B cell (primary cell): ENCODE measurements at regions of chr12 and their contacts with region 1.

Region 1: DNA sequence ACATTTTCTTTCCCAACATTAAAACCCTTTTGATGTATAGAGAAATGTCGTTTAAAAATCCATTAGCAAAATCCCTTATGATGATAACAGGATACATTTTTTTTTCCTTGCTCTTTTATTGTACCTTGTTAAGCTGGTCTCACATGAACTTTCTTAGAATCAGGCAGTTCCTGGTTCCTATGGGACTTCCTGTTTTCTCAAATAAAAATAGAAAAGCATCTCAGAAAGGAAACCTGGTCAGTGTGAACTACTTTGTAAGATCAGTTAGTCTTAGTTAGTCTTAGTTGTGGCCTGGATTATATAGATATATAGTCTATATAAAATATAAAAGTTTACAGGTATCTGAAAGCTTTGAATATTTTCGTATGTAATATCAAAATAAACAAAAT is 40.3 kb downstream of the LEMD3 start:
- DNase-seq: peak; percentile 62
- ATAC-seq: peak; percentile 47
- H3K4me3 ChIP-seq: peak overlapping the region in 2 of 5 experiments; percentile 3 to 34
- H3K4me3 Mint-ChIP-seq: peak overlapping the region; percentile 72
- H3K27ac ChIP-seq: peak overlapping the region; percentile 57 to 82
- H3K27ac Mint-ChIP-seq: peak overlapping the region; percentile 72
- H3K4me1 ChIP-seq: peaks cover 34 to 59% of the 10 kb centered on the region in 2 donors
- H3K4me1 Mint-ChIP-seq: peaks cover 57% of the 10 kb centered on the region
- H3K27me3 ChIP-seq: no peaks in the 10 kb centered on the region
- H3K27me3 Mint-ChIP-seq: no peaks in the 10 kb centered on the region
- CTCF ChIP-seq: no peak

Region 2: GRCh38 chr12:65074932-65075331 is 134.7 kb before region 1 on chr12:
- CTCF ChIA-PET with region 1: no interaction called
- POLR2A ChIA-PET with region 1: interaction called, 11 read pairs
- intact Hi-C with region 1: no loop called
- DNase-seq: no peak
- ATAC-seq: no peak
- H3K4me3 ChIP-seq: no peak overlapping the region
- H3K4me3 Mint-ChIP-seq: no peak overlapping the region
- H3K27ac ChIP-seq: no peak overlapping the region
- H3K27ac Mint-ChIP-seq: no peak overlapping the region
- H3K4me1 ChIP-seq: no peaks in the 10 kb centered on the region
- H3K4me1 Mint-ChIP-seq: peaks cover 6% of the 10 kb centered on the region
- H3K27me3 ChIP-seq: no peaks in the 10 kb centered on the region
- H3K27me3 Mint-ChIP-seq: peaks cover 17% of the 10 kb centered on the region
- CTCF ChIP-seq: no peak

Region 3: DNA sequence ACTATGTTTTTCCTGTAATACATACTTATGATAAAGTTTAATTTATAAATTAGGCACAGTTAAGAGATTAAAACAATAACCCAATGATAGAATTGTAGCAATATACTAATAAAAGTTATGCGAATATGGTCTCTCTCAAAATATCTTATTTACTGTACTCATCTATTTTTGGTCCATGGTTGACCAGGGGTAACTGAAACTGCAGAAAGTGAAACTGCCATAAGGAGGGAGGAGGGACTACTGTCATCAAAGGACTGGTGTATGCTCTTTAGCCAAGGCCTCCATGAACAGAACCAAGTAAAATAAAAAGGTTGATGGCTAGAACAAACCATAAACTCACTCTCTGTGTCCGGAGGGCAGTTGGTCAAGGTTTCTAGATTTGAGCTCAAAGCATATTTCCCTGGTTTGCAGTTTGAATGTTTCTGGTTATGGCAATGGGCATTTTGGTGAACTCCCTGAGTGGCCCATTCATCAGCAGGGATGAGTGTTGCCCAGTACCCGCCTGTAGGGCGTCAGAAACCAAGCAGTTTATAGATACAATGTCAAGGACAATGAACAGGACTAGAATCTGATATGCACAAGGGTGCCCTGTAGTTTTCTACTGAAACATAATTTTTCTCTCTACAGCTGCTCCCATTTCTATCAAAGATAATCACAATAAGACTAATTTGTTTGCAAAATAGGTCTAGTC is 20.5 kb before region 1 on chr12:
- CTCF ChIA-PET with region 1: no interaction called
- POLR2A ChIA-PET with region 1: no interaction called
- intact Hi-C with region 1: no loop called
- DNase-seq: peak; percentile 34
- ATAC-seq: peak; percentile 56
- H3K4me3 ChIP-seq: no peak overlapping the region
- H3K4me3 Mint-ChIP-seq: peak overlapping the region; percentile 47
- H3K27ac ChIP-seq: peak overlapping the region; percentile 1 to 70
- H3K27ac Mint-ChIP-seq: peak overlapping the region; percentile 56
- H3K4me1 ChIP-seq: peaks cover 38 to 72% of the 10 kb centered on the region in 2 donors
- H3K4me1 Mint-ChIP-seq: peaks cover 77% of the 10 kb centered on the region
- H3K27me3 ChIP-seq: no peaks in the 10 kb centered on the region
- H3K27me3 Mint-ChIP-seq: no peaks in the 10 kb centered on the region
- CTCF ChIP-seq: no peak